ENCODE measurements at regions of chr3 and their contacts with region 1.

Region 1: GRCh38 chr3:148955544-148956346 is 35.6 kb upstream of the GYG1 start:
- DNase-seq: peak; percentile 70
- H3K4me3 ChIP-seq: no peak overlapping the region
- H3K27ac ChIP-seq: no peak overlapping the region
- H3K4me1 ChIP-seq: peaks cover 3% of the 10 kb centered on the region
- CTCF ChIP-seq: peak; percentile 91

Region 2: DNA sequence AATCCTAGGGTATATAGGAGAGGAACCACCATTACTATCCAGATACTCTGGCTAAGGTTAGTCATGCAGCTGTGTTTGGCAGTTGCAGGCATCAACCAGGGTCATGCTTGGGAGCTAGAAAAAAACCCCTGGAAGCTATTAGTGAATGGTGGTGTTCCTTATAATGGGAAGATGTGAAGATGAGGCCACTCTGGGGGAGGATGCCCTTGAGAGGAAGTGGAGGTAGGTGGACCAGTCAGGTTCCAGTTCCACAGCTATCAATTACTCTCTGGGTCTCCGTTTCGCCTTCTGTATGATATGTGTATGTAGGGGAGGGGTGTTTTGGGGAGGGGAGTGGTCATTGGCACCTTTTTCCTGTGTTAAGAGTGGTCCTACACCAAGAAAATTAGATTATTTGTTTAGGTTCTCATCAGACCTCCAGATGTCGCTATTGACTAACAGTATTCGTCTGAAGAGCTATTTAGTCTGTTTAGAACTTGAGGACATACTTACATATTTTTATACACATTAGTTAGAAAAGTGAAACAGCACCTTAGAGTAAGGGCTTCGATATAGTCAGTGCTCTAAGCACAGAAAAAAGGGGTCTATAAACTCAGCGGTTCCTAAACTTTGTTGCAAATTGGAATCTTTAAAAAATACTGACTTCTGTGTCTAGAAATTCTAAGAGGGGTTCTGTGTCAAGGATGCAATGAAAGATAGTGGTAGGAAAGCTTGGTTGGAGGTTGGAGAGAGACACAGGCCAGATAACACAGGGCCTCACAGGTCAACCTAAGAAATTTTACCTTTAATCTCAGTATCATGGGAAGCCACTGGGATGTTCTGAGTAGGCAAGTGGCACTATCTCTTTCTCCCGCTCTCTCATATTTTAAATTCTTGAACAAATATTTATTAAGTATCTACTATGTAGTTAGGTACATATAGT is 164.6 kb after region 1 on chr3:
- CTCF ChIA-PET with region 1: interaction called, 3 read pairs
- POLR2A ChIA-PET with region 1: interaction called, 4 read pairs
- intact Hi-C with region 1: loop called (anchors 1 kb)
- DNase-seq: peak; percentile 81
- H3K4me3 ChIP-seq: no peak overlapping the region
- H3K27ac ChIP-seq: no peak overlapping the region
- H3K4me1 ChIP-seq: peaks cover 4% of the 10 kb centered on the region
- CTCF ChIP-seq: peak; percentile 94

Region 3: DNA sequence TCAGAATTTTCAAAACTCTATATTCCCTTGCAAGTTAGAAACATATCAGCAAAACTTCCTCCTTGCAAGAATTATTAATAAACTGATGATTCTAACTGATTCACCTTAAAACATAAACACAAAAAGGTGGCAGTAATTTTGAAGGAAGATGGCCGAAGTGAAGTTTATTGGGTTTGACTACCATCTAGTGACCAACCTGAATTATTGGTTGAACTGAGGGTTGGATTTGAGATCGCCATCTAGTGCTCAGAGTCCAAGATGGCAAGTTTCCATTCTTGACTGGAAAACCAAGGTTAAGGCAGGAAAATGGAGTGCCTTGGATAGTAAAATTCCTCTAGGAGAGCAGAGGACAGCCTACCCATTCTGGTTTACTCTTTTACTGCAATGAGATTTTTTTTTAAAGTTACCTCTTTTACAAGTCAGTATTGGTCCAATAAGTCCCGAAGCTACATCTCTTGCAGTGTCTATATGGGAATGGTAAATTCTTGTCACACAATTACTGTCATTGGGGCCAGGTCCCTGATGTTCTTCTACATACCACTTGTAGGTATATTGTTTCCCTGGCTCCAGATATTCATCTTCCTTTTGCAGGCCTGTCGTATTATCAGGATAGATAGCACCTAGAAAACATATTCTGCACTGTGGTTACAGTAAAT is 317.5 kb after region 1 on chr3:
- CTCF ChIA-PET with region 1: interaction called, 4 read pairs
- POLR2A ChIA-PET with region 1: interaction called, 4 read pairs
- intact Hi-C with region 1: loop called (anchors 1 kb)
- DNase-seq: peak; percentile 86
- H3K4me3 ChIP-seq: no peak overlapping the region
- H3K27ac ChIP-seq: no peak overlapping the region
- H3K4me1 ChIP-seq: peaks cover 17% of the 10 kb centered on the region
- CTCF ChIP-seq: peak; percentile 100

Region 4: GRCh38 chr3:149480325-149481017 is 524.7 kb after region 1 on chr3:
- CTCF ChIA-PET with region 1: no interaction called
- POLR2A ChIA-PET with region 1: no interaction called
- intact Hi-C with region 1: loop called (anchors 10 kb)
- DNase-seq: peak; percentile 38
- H3K4me3 ChIP-seq: no peak overlapping the region
- H3K27ac ChIP-seq: no peak overlapping the region
- H3K4me1 ChIP-seq: no peaks in the 10 kb centered on the region
- CTCF ChIP-seq: peak; percentile 83

Region 5: GRCh38 chr3:149717391-149718056 is 761.8 kb after region 1 on chr3:
- CTCF ChIA-PET with region 1: no interaction called
- POLR2A ChIA-PET with region 1: no interaction called
- intact Hi-C with region 1: loop called (anchors 5 kb)
- DNase-seq: peak; percentile 39
- H3K4me3 ChIP-seq: no peak overlapping the region
- H3K27ac ChIP-seq: no peak overlapping the region
- H3K4me1 ChIP-seq: no peaks in the 10 kb centered on the region
- CTCF ChIP-seq: peak; percentile 80

Measured in OCI-LY7 (cell line).